Calu3 (cell line): ENCODE measurements at regions of chr2 and their contacts with region 1.

Region 1: DNA sequence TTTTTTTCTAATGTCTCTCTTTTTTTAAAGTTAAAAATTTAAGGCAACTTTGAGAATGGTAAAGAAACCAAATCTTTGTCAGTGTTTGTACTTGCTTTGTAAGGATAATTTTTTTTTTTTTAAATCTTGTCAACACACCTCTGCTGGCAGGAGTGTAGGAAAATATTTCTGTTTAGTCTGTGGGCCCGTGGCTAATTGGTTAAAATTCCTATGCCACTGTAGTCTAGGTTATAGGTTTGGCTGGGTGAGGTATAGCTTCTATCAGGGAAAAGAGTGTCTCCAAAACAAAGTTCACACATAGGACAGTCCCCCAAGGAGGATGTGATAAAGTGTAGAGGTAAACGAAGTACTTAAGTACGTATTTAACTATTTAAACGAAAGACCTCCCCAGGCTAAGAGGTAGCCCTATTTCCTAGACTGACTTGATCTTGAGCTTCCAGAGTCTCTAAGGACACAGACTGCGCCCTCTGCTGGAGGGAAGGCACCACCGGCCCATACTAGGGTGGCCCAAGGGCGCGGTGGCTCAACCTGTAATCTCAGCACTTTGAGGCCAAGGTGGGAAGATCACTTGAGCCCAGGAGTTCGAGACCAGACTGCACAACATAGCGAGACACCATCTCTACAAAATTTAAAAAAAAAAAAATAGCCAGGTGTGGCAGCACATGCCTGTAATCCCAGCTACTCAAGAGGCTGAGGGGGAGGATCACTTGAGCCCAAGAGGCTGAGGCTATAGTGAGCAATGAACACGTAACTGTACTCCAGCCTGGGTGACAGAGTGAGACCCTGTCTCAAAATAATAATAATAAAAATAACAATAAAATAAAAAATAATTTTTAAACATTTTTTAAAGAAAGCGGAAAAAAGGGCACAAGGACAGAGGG is 8.9 kb downstream of the TEX44 start:
- DNase-seq: peak; percentile 91
- H3K4me3 Mint-ChIP-seq: no peak overlapping the region
- H3K27ac Mint-ChIP-seq: peak overlapping the region; percentile 54
- H3K4me1 Mint-ChIP-seq: peaks cover 26% of the 10 kb centered on the region
- H3K27me3 Mint-ChIP-seq: no peaks in the 10 kb centered on the region
- CTCF ChIP-seq: peak; percentile 83

Region 2: DNA sequence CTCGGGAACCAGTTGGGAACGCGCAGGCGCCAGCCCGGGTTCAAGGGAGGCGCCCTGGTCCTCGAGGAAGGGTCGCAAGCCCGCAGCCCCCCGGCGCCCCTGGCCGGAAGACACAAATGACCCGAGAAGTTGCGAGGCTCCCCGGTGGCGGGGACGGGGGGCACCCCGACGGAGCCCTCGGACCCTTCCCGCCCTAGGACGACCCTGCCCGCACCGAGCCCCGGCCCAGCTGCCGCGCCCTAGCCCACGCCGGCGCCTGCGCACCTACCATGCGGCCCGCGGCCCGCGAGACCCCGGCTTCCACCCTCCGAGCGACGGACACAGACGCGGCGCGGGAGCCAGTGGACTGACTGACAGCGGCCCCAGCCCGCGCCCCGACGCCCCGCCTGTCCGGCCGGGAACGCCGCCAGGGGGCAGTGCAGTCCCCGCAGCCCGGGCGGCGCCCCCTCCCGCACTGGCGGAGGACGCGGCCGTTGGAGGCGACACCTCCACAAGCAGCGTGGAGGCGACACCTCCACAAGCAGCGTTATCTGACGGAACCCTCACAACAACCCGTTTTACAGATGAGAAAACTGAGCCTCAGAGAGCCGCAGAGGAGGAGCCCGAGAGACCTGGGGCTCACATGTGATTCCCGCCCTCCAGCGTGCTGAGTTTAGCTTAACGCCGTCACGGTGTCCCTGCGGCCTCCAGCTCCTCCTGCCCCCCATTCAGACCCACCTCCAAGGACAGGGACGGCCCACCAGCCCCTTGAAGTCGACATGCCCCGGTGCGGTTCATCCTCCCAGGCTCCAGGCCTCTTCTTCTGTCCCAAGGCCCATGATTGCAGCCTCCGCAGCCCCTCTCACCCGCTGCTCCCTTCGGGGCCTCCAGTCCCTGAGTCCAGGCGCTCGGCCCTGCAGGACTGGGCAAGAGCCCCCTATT is 71.2 kb before region 1 on chr2 and contains the start of gene NMUR1:
- CTCF ChIA-PET with region 1: no interaction called
- intact Hi-C with region 1: no loop called
- DNase-seq: peak; percentile 73
- H3K4me3 Mint-ChIP-seq: peak within 1 kb of the TSS; percentile 51
- H3K27ac Mint-ChIP-seq: no peak within 1 kb of the TSS
- H3K4me1 Mint-ChIP-seq: no peaks in the 10 kb centered on the region
- H3K27me3 Mint-ChIP-seq: peaks cover 55% of the 10 kb centered on the region
- CTCF ChIP-seq: peak; percentile 92
- total RNA-seq, gene NMUR1: not detected in 2 replicates

Region 3: DNA sequence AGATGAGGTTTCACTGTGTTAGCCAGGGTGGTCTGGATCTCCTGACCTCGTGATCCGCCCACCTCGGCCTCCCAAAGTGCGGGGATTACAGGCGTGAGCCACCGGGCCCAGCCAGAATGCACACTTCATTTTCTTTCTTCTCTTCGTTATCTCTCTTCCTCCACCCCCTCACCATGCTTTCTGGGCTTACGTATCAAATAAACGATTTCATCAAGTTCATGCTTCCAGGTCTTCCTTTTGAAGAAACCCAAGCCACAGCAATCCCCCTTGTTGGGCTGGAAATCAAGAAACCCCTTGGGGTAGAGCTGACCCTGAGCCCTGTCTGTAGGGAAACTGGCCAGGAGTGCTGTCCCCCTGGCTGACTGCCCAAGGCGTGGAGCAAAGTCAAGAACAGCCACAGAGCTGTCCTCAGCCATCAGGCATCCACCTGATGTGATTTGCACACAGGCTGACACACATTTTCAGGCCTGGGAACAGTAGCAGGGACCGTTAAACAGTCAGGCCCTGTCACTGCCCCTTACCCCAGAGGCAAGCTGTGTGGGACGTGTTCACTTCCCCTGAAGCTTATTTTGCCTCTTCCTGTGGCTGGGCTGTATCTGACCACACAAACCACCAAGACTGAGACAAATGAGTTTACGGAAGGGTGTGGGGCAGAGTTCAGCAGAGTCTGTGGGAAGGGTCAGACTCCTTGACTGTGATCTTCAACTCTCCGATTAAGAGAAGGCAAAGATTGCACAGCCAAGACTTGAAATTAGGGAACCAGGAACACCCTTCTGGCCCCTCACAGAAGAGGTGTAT is 56.3 kb before region 1 on chr2:
- CTCF ChIA-PET with region 1: no interaction called
- intact Hi-C with region 1: no loop called
- DNase-seq: no peak
- H3K4me3 Mint-ChIP-seq: no peak overlapping the region
- H3K27ac Mint-ChIP-seq: no peak overlapping the region
- H3K4me1 Mint-ChIP-seq: no peaks in the 10 kb centered on the region
- H3K27me3 Mint-ChIP-seq: peaks cover 30% of the 10 kb centered on the region
- CTCF ChIP-seq: no peak

Region 4: GRCh38 chr2:231563378-231563961 is 38.1 kb before region 1 on chr2:
- CTCF ChIA-PET with region 1: interaction called, 20 read pairs
- intact Hi-C with region 1: loop called (anchors 1 kb)
- DNase-seq: peak; percentile 64
- H3K4me3 Mint-ChIP-seq: no peak overlapping the region
- H3K27ac Mint-ChIP-seq: no peak overlapping the region
- H3K4me1 Mint-ChIP-seq: no peaks in the 10 kb centered on the region
- H3K27me3 Mint-ChIP-seq: no peaks in the 10 kb centered on the region
- CTCF ChIP-seq: peak; percentile 85

Region 5: GRCh38 chr2:231648587-231649174 is 47.1 kb after region 1 on chr2:
- CTCF ChIA-PET with region 1: no interaction called
- intact Hi-C with region 1: no loop called
- DNase-seq: peak; percentile 93
- H3K4me3 Mint-ChIP-seq: no peak overlapping the region
- H3K27ac Mint-ChIP-seq: no peak overlapping the region
- H3K4me1 Mint-ChIP-seq: peaks cover 16% of the 10 kb centered on the region
- H3K27me3 Mint-ChIP-seq: no peaks in the 10 kb centered on the region
- CTCF ChIP-seq: peak; percentile 80

Region 6: DNA sequence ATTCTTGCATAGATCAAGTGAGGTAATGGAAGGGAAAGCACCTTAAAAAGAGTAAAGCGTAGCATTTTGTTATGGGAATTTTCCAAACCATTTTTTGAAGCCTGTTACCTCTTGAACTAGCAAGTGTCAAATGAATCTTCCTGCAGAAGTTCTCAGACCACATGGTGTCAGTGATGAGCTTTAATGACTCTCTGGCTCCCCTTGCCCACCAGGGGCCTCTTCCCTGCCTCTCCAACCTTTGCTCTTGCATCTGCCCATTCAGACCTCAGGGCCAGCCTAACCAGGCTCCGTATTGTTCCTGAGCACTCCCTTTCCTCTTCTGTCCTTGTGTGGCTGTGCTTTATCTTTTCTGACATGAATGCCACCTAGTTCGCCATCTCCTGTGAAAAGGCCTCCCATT is 515.8 kb after region 1 on chr2:
- CTCF ChIA-PET with region 1: no interaction called
- intact Hi-C with region 1: no loop called
- DNase-seq: no peak
- H3K4me3 Mint-ChIP-seq: no peak overlapping the region
- H3K27ac Mint-ChIP-seq: no peak overlapping the region
- H3K4me1 Mint-ChIP-seq: no peaks in the 10 kb centered on the region
- H3K27me3 Mint-ChIP-seq: no peaks in the 10 kb centered on the region
- CTCF ChIP-seq: no peak